Endothelial cell of umbilical vein (primary cell): ENCODE measurements at regions of chr9 and their contacts with region 1.

Region 1: DNA sequence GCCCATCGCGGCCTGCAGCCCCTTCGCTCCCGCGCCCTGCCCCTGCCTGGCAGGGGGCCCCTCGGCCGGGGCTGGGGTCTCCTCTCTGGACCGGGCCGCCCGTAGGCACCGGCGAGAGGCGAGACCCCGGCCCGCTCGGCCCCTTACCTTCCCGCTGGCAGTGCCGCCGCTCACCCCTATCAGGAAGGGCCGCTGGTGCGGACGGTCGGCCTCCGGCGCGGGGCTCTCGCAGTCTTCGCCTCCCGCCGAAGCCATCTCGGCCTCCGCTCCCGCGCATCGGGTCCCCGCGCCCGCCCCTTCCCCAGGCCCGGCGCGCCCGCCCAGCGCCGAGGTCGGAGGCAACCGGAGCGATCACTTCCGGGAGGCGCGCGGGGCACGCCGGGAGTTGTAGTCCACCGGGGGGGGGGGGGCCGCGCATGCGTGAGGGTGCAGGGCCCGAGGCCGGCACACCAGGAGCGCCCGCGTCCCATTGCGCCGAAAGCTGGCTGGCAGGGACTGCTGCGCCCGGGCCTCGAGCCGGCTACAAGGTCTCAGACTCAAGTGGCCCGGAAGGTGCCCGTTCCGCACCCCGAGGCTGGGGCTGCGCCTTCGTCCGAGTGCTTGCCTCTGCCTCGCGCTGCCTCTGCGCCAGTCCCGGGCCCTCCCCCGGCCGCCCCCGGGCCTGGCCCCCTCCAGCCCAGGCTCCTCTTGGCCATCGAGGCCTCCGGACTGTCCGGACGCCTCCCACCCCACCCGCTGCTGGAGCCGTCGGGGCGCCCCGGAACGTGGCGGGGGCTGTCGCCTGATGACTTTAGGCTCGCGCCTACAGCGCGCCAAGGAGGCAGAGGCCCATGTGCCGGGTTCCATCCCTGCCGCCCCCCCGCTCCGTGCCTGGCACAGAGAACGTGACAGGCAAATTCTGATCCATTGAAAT is at the start of gene UCK1:
- DNase-seq: peak; percentile 83
- H3K4me3 ChIP-seq: peak within 1 kb of the TSS; percentile 40 to 73 (median 57)
- H3K27ac ChIP-seq: peak within 1 kb of the TSS; percentile 25
- H3K4me1 ChIP-seq: peaks cover 4% of the 10 kb centered on the region
- H3K27me3 ChIP-seq: no peaks in the 10 kb centered on the region
- CTCF ChIP-seq: no peak
- POLR2A ChIP-seq: peak; percentile 76
- total RNA-seq, gene UCK1: 23.6 and 24.1 TPM in 2 replicates

Region 2: GRCh38 chr9:130847327-130848217 is 683.6 kb before region 1 on chr9:
- CTCF ChIA-PET with region 1: no interaction called
- POLR2A ChIA-PET with region 1: no interaction called
- dilution Hi-C with region 1: no loop called
- intact Hi-C with region 1: no loop called
- DNase-seq: peak; percentile 96
- H3K4me3 ChIP-seq: peak overlapping the region in 1 of 3 experiments; percentile 56
- H3K27ac ChIP-seq: peak overlapping the region; percentile 95
- H3K4me1 ChIP-seq: peaks cover 58% of the 10 kb centered on the region
- H3K27me3 ChIP-seq: no peaks in the 10 kb centered on the region
- CTCF ChIP-seq: peak in 1 of 2 donors; percentile 4
- POLR2A ChIP-seq: peak; percentile 55

Region 3: DNA sequence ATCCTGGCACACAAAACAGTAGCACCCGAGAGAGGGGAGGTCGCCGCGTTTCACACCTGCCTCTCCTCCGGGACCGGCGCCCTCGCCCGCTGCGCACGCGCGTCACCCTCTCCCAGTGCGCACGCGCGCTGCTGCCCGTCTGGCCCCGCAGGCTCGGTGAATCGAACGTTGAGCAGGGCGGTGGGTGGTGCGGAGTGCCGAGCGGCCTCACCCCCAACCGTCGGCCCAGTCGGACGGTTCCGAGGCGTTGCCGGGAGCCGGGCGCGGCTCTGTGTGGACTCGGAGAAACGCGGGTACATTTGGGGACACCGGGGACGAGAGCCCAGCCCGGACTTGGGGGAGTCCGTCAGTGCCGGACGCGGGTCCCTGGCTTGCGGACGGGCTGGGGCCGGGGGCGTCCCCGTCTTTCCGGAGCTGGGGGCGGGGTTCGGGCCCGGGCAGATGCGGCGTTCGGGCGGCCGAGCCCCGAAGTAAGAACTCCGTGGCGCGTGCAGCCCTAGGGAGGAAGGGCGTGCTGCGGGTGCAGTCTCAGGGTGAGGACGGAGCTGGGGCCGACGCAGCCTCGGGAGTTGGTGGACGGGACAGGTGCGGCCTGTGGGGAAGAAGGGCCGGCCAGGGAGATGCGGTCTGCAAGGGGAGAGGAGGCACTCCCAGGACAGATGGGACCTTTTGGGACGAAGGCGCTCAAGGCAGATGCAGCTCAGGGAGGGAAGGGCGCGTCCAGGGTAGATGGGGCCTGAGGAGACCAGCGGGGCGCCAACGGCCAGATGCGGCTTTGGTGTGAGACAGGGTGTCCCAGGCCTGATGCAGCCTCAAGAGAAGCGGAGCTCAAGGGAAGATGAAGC is 28.2 kb before region 1 on chr9 and contains the start of gene POMT1:
- CTCF ChIA-PET with region 1: no interaction called
- POLR2A ChIA-PET with region 1: no interaction called
- dilution Hi-C with region 1: no loop called
- intact Hi-C with region 1: loop called (anchors 2 kb)
- DNase-seq: peak; percentile 86
- H3K4me3 ChIP-seq: peak within 1 kb of the TSS; percentile 61 to 72 (median 62)
- H3K27ac ChIP-seq: no peak within 1 kb of the TSS
- H3K4me1 ChIP-seq: peaks cover 10% of the 10 kb centered on the region
- H3K27me3 ChIP-seq: no peaks in the 10 kb centered on the region
- CTCF ChIP-seq: no peak
- POLR2A ChIP-seq: peak; percentile 68
- total RNA-seq, gene POMT1: 39.1 and 44.7 TPM in 2 replicates

Region 4: DNA sequence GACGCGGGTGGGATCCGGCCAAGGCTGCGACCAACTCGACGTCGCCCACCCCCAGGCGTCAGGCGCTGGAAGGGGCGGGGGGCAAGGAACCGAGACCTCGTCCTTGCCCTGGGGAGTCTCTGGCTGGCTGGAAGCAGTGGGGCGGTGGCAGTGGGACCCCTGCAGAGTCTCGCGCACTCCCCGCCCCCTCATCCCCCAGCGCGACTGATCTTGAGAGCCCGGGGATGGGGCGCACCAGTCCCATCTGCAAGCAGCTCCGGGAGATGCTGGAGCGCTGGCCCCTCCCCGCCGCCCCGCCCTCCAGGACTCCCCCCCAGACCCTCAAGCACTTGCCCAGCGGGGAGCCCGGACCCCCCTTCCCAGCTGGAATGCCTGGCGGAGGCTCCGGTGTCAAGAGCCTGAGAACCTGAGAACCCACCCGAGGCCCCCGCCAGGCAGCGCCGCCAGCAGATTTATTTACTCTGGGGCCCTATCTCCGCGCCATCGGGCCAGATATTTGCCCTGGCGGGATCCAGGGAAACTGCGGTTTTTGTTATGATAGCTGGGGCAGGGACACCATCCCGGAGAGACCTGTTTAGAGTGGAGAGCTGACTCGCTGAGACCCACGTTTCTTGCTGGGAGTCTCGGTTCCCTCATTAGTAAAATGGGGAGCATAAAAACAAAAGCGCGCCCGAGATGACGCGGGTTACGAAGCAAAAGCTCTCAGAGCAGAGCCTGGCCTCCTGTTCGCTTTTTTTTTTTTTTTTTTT is 15.3 kb after region 1 on chr9:
- CTCF ChIA-PET with region 1: interaction called, 4 read pairs
- POLR2A ChIA-PET with region 1: interaction called, 10 read pairs
- dilution Hi-C with region 1: no loop called
- intact Hi-C with region 1: no loop called
- DNase-seq: peak; percentile 15
- H3K4me3 ChIP-seq: peak overlapping the region in 2 of 3 experiments; percentile 10 to 48
- H3K27ac ChIP-seq: no peak overlapping the region
- H3K4me1 ChIP-seq: peaks cover 3% of the 10 kb centered on the region
- H3K27me3 ChIP-seq: peaks cover 33 to 34% of the 10 kb centered on the region in 2 experiments
- CTCF ChIP-seq: no peak
- POLR2A ChIP-seq: no peak

Region 5: DNA sequence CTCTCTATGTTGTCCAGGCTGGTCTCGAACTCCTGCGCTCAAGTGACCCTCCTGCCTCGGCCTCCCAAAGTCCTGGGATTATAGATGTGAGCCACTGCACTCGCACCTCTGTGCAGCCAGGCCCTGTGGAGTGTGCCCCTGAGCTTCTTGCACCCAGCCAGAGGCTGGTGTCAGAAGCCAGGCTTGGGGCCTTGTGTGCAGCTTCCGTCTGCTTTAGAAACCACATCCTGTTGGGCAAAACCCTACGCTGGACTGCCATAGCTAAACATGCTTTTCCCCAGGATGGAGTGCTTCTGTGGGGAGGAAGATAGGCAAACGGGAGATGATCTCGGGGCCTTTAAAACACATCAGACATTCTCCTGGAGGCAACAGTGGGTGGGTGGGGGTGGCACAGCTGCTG is 54.2 kb after region 1 on chr9:
- CTCF ChIA-PET with region 1: no interaction called
- POLR2A ChIA-PET with region 1: no interaction called
- dilution Hi-C with region 1: no loop called
- intact Hi-C with region 1: loop called (anchors 10 kb)
- DNase-seq: no peak
- H3K4me3 ChIP-seq: no peak overlapping the region
- H3K27ac ChIP-seq: no peak overlapping the region
- H3K4me1 ChIP-seq: no peaks in the 10 kb centered on the region
- H3K27me3 ChIP-seq: no peaks in the 10 kb centered on the region
- CTCF ChIP-seq: no peak
- POLR2A ChIP-seq: no peak